Naive thymus-derived CD4-positive, alpha-beta T cell (primary cell): ENCODE measurements at regions of chr5 and their contacts with region 1.

Region 1: DNA sequence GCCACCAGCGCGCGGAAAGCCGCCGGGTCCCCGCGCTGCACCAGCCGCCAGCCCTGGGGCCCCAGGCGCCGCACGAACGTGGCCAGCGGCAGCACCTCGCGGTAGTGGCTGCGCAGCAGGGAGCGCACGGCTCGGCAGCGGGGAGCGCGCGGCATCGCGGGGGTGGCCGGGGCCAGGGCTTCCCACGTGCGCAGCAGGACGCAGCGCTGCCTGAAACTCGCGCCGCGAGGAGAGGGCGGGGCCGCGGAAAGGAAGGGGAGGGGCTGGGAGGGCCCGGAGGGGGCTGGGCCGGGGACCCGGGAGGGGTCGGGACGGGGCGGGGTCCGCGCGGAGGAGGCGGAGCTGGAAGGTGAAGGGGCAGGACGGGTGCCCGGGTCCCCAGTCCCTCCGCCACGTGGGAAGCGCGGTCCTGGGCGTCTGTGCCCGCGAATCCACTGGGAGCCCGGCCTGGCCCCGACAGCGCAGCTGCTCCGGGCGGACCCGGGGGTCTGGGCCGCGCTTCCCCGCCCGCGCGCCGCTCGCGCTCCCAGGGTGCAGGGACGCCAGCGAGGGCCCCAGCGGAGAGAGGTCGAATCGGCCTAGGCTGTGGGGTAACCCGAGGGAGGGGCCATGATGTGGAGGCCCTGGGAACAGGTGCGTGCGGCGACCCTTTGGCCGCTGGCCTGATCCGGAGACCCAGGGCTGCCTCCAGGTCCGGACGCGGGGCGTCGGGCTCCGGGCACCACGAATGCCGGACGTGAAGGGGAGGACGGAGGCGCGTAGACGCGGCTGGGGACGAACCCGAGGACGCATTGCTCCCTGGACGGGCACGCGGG is at the start of gene TERT:
- DNase-seq: peak; percentile 50 to 81 (median 74)
- ATAC-seq: peak; percentile 91
- H3K4me3 ChIP-seq: no peak within 1 kb of the TSS
- H3K4me3 Mint-ChIP-seq: peak within 1 kb of the TSS in 9 of 10 donors; percentile 45 to 66 (median 59)
- H3K27ac ChIP-seq: no peak within 1 kb of the TSS
- H3K27ac Mint-ChIP-seq: no peak within 1 kb of the TSS
- H3K4me1 ChIP-seq: peaks cover 0 to 11% of the 10 kb centered on the region in 2 donors
- H3K4me1 Mint-ChIP-seq: peaks cover 0 to 15% (median 4%) of the 10 kb centered on the region in 7 donors
- H3K27me3 ChIP-seq: no peaks in the 10 kb centered on the region
- H3K27me3 Mint-ChIP-seq: peaks cover 0 to 6% (median 0%) of the 10 kb centered on the region in 5 donors
- total RNA-seq, gene TERT: 0.13 to 3.3 (median 1.8) TPM

Region 2: DNA sequence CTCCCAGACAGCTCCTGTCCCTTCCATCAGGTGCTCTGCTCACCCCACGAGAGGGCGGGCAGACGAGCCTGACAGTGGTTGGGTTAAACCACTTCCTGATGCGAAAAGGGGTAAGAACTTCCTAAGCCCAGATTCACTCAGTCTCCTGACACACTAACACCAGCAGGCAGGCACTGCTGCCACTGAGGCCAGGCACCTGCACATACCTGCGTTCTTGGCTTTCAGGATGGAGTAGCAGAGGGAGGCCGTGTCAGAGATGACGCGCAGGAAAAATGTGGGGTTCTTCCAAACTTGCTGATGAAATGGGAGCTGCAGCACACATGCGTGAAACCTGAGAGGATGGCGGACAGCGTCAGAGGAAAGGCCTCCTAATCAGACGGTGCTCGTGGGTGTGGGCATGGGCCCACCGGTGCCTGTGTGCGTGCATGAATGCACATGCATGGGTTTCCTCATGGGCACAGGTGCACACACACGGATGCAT is 39.9 kb before region 1 on chr5:
- CTCF ChIA-PET with region 1: interaction called, 3 read pairs
- POLR2A ChIA-PET with region 1: no interaction called
- intact Hi-C with region 1: loop called in 1 of 2 experiments (anchors 2 kb)
- DNase-seq: peak; percentile 31 to 79 (median 71)
- ATAC-seq: peak; percentile 83
- H3K4me3 ChIP-seq: peak overlapping the region; percentile 48
- H3K4me3 Mint-ChIP-seq: peak overlapping the region; percentile 76 to 97 (median 90)
- H3K27ac ChIP-seq: peak overlapping the region; percentile 57
- H3K27ac Mint-ChIP-seq: peak overlapping the region; percentile 30 to 93 (median 89)
- H3K4me1 ChIP-seq: peaks cover 9 to 18% of the 10 kb centered on the region in 2 donors
- H3K4me1 Mint-ChIP-seq: peaks cover 7 to 23% (median 20%) of the 10 kb centered on the region in 7 donors
- H3K27me3 ChIP-seq: no peaks in the 10 kb centered on the region
- H3K27me3 Mint-ChIP-seq: no peaks in the 10 kb centered on the region